Transverse colon (tissue), 4 donors: ENCODE measurements at regions of chr14 and their contacts with region 1.

Region 1: GRCh38 chr14:58297762-58298476 is 436 bp upstream of the ARID4A start:
- DNase-seq: peak; percentile 99
- H3K4me3 ChIP-seq: peak overlapping the region; percentile 41 to 94 (median 92)
- H3K27ac ChIP-seq: peak overlapping the region; percentile 96 to 100 (median 98)
- H3K4me1 ChIP-seq: peaks cover 14 to 31% (median 22%) of the 10 kb centered on the region in 4 donors
- H3K27me3 ChIP-seq: no peaks in the 10 kb centered on the region
- CTCF ChIP-seq: peak in 1 of 5 experiments; percentile 33
- EP300 ChIP-seq: no peak
- POLR2A ChIP-seq: peak; percentile 9

Region 2: DNA sequence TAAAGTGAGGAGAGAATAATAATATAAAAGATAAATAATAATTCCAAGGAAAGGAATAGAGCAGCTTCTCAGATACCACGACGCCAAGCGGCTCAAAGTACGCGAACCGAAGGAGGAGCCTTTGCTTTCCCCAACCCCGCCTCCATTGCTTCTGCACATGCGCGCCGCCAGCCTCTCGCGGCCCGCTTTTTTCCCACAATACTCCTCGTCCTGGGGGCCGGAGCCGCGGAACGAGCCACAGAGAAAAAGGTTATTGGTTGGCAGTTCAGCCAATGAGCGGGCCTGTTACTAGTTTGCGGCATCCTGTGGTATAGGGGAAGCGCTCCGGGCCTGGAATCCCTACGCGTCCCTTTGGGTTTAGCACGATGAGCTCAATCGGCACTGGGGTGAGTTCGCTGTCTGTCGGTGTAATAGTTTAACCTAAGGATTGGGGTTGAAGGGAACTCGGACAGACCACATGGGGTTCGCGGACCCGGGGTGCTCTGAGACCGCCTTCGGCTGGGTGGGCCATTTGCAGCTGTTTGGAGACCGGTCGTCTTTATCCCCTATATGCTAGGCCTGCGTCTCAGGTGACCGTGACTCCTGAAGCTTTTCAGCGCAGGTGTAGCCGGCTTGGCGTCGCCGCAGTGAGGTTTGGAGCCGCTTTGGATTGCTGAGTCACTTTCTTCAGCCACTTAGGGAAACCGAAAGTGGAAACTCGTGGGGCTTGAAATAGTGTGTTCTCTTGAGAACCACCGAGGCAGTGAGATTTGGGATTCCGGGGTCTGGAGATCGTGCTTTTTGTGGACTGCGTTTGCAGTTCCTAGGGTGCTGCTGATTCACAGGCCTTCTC is 53.1 kb before region 1 on chr14 and contains the start of gene PSMA3:
- in situ Hi-C with region 1: loop called in 2 of 4 experiments (anchors 10 kb)
- intact Hi-C with region 1: loop called (anchors 10 kb)
- DNase-seq: peak; percentile 98
- H3K4me3 ChIP-seq: peak within 1 kb of the TSS; percentile 61 to 94 (median 74)
- H3K27ac ChIP-seq: peak within 1 kb of the TSS; percentile 93 to 98 (median 97)
- H3K4me1 ChIP-seq: peaks cover 11 to 38% (median 23%) of the 10 kb centered on the region in 4 donors
- H3K27me3 ChIP-seq: no peaks in the 10 kb centered on the region
- CTCF ChIP-seq: no peak
- EP300 ChIP-seq: no peak
- POLR2A ChIP-seq: peak; percentile 77
- total RNA-seq, gene PSMA3: 38.5 to 87.3 (median 80.3) TPM

Region 3: GRCh38 chr14:58280954-58281787 is 16.7 kb before region 1 on chr14:
- in situ Hi-C with region 1: no loop called
- intact Hi-C with region 1: loop called (anchors 2 kb)
- DNase-seq: peak; percentile 44
- H3K4me3 ChIP-seq: no peak overlapping the region
- H3K27ac ChIP-seq: peak overlapping the region; percentile 67 to 81 (median 74)
- H3K4me1 ChIP-seq: peaks cover 20 to 51% (median 32%) of the 10 kb centered on the region in 4 donors
- H3K27me3 ChIP-seq: no peaks in the 10 kb centered on the region
- CTCF ChIP-seq: no peak
- EP300 ChIP-seq: no peak
- POLR2A ChIP-seq: no peak